HCT116 (cell line): ENCODE measurements at regions of chr6 and their contacts with region 1.

Region 1: GRCh38 chr6:51855310-51856082 is 231.9 kb downstream of the PKHD1 start:
- DNase-seq: peak; percentile 41
- ATAC-seq: peak; percentile 73
- H3K4me3 ChIP-seq: no peak overlapping the region
- H3K27ac ChIP-seq: no peak overlapping the region
- H3K4me1 ChIP-seq: no peaks in the 10 kb centered on the region
- H3K27me3 ChIP-seq: no peaks in the 10 kb centered on the region
- CTCF ChIP-seq: peak; percentile 34 to 81 (median 63); a peak in 4 of 6 replicates
- POLR2A ChIP-seq: no peak
- RAD21 ChIP-seq: peak; percentile 39; the same call in 1 of the 2 replicates

Region 2: GRCh38 chr6:50816115-50816675 is 1039.3 kb before region 1 on chr6:
- CTCF ChIA-PET with region 1: no interaction called
- POLR2A ChIA-PET with region 1: no interaction called
- RAD21 ChIA-PET with region 1: no interaction called
- intact Hi-C with region 1: loop called (anchors 10 kb)
- DNase-seq: peak; percentile 34
- ATAC-seq: no peak
- H3K4me3 ChIP-seq: no peak overlapping the region
- H3K27ac ChIP-seq: no peak overlapping the region
- H3K4me1 ChIP-seq: no peaks in the 10 kb centered on the region
- H3K27me3 ChIP-seq: no peaks in the 10 kb centered on the region
- CTCF ChIP-seq: peak; percentile 27 to 82 (median 59); a peak in 4 of 6 replicates
- POLR2A ChIP-seq: no peak
- RAD21 ChIP-seq: peak; percentile 60

Region 3: GRCh38 chr6:51844336-51844735 is 11.2 kb before region 1 on chr6:
- CTCF ChIA-PET with region 1: no interaction called
- POLR2A ChIA-PET with region 1: no interaction called
- RAD21 ChIA-PET with region 1: no interaction called
- intact Hi-C with region 1: no loop called
- DNase-seq: no peak
- ATAC-seq: no peak
- H3K4me3 ChIP-seq: no peak overlapping the region
- H3K27ac ChIP-seq: no peak overlapping the region
- H3K4me1 ChIP-seq: no peaks in the 10 kb centered on the region
- H3K27me3 ChIP-seq: no peaks in the 10 kb centered on the region
- CTCF ChIP-seq: no peak
- POLR2A ChIP-seq: no peak
- RAD21 ChIP-seq: no peak

Region 4: DNA sequence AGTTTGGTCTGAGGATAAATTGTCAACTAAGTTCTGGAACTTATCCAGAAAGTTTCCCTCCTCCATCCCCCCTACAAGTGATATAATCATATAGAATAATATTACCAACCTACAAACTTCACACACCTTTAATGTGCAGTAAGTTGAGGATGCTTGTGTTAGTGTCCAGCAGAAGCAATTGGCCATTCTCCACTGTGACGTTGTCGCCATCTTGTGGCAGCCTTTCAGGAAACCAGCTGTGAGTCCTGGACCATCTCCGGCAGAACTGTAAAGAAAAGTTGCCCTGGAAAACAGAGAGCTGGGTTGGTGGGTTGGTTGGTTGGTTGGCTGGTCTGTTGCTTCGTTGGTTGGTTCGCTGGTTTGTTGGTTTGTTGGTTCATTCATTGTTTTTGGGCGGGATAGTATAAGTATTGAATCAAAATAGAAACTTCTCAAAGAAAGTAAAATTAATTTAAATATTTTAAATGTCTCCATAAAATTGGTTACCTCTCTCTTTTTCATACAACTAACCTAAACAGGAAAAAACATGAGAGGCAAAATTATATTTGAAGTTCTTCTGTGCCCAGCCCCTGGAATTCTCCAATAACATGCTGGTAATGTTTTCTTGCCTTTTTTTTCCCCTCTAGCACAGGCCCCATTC is 104.4 kb after region 1 on chr6:
- CTCF ChIA-PET with region 1: interaction called, 7 read pairs
- POLR2A ChIA-PET with region 1: no interaction called
- RAD21 ChIA-PET with region 1: no interaction called
- intact Hi-C with region 1: loop called (anchors 1 kb)
- DNase-seq: peak; percentile 43
- ATAC-seq: peak; percentile 82
- H3K4me3 ChIP-seq: no peak overlapping the region
- H3K27ac ChIP-seq: no peak overlapping the region
- H3K4me1 ChIP-seq: no peaks in the 10 kb centered on the region
- H3K27me3 ChIP-seq: 0 out of 2 replicates have a peak, but pooled peaks cover 6% of the 10 kb centered on the region
- CTCF ChIP-seq: peak; percentile 34 to 80 (median 80); a peak in 5 of 6 replicates
- POLR2A ChIP-seq: no peak
- RAD21 ChIP-seq: peak; percentile 75

Region 5: DNA sequence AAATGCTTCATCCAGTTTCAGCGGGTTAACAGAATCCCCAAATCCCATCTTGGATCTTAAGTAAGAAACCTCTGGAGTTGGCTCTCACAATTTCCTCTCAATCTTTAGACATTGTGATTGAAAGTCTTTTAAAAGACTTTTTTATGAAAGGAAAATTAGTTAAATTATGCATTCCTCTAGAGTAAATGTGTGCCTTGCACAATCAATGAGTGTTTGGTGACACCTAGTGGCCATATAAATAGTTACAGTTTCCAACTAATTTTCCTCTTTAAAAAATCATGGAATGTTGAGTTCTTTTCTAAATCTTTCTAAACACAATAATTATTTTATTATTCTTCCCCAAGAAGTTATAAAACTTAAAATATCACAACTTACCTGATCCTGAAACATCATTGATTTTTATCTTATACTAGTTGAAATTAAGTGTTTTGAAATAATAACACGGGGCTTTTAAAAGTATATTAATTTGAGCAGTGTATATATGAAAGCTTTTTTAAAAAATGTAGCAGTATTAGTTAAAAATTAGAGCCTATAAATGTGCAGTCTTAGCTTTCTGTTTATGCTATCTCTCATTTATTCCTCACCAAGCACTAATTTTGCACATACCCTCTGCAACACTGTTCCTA is 165.6 kb after region 1 on chr6:
- CTCF ChIA-PET with region 1: no interaction called
- POLR2A ChIA-PET with region 1: no interaction called
- RAD21 ChIA-PET with region 1: no interaction called
- intact Hi-C with region 1: loop called (anchors 1 kb)
- DNase-seq: peak; percentile 3
- ATAC-seq: no peak
- H3K4me3 ChIP-seq: no peak overlapping the region
- H3K27ac ChIP-seq: no peak overlapping the region
- H3K4me1 ChIP-seq: no peaks in the 10 kb centered on the region
- H3K27me3 ChIP-seq: peaks cover 4% of the 10 kb centered on the region; the same call in 1 of the 2 replicates
- CTCF ChIP-seq: peak; percentile 48 to 77 (median 50); a peak in 4 of 6 replicates
- POLR2A ChIP-seq: no peak
- RAD21 ChIP-seq: peak; percentile 67

Region 6: DNA sequence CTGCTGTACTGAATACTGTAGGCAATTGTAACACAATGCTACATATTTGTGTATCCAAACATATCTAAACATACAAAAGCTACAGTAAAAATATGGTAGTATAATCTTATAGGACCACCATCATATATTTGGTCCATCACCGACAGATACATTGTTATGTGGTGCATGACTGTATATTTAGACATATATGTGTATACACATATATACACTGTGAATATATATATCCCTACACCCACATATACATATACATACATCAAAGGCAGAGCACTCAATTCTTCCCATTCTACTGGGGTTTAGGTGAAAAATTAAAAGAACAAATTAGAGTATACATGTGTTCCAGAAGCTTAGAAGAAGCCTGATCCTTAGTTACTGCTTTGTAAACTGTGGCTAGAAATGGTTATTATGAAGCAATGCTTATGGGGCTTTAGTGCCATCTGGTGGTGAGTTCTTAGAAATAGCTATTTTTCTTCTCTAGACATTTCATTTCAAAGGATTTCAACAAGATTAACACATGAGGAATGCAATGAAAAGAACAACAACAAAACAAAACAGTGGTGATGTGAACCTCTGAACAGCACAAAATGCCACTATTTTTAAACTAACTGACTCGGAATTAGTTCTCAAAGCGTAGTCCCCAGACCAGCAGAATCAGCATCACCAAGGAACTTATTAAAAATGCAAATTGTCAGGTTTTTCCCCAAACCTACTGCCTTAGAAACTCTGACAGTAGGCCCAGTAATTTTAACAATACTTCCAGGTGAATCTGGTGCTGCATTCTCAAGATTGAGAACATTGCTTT is 194.0 kb after region 1 on chr6:
- CTCF ChIA-PET with region 1: interaction called, 11 read pairs
- POLR2A ChIA-PET with region 1: no interaction called
- RAD21 ChIA-PET with region 1: no interaction called
- intact Hi-C with region 1: no loop called
- DNase-seq: peak; percentile 32
- ATAC-seq: peak; percentile 74
- H3K4me3 ChIP-seq: no peak overlapping the region
- H3K27ac ChIP-seq: no peak overlapping the region
- H3K4me1 ChIP-seq: no peaks in the 10 kb centered on the region
- H3K27me3 ChIP-seq: peaks cover 48% of the 10 kb centered on the region; the same call in 1 of the 2 replicates
- CTCF ChIP-seq: peak; percentile 32 to 76 (median 60); a peak in 5 of 6 replicates
- POLR2A ChIP-seq: no peak
- RAD21 ChIP-seq: peak; percentile 59